Heart left ventricle (tissue), 16 donors: ENCODE measurements at regions of chr16 and their contacts with region 1.

Region 1: DNA sequence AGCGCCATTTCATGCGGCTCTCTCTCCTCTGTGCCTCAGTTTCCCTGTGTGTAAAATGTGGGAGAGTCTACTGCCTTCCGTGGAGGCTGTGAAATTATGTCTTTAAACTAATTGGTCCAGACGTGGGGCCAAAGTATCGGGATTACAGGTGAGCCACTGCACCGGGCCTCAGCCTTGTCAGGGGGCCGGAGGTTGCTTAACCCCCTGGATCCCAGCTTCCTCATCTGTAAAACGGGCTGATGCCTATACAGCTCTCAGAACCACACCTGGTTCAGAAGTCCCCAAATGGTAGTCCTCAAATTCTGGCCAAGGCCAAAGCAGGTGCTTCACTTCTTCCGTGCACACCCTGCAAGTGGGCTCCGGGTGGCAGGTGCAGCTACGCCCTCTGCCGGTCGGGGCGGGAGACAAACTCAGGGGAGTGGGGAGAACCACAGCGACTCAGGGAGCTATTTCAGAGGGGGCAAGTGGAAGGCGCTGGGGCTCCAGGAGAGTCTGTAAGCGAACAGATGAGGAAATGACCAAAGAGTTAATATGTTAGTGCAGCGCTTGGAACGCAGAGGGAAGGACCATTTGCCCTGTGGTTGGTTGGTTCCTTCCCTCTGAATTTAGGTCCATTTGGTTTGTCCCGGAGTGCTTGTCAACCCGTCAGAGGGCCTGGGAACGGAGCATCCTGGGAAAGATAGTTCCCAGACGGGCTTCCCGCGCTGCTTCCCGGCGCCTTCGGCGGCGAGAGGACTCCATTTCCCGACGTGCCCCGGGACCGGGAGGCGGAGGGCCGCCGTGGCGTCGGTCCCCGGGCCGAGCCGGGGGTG is at the start of gene MGRN1:
- DNase-seq: peak; percentile 94 to 97 (median 97)
- ATAC-seq: peak; percentile 98 to 99 (median 98)
- H3K4me3 ChIP-seq: peak within 1 kb of the TSS; percentile 70 to 100 (median 98)
- H3K27ac ChIP-seq: peak within 1 kb of the TSS; percentile 84 to 99 (median 94)
- H3K4me1 ChIP-seq: peaks cover 0 to 28% (median 16%) of the 10 kb centered on the region in 12 donors
- H3K27me3 ChIP-seq: no peaks in the 10 kb centered on the region
- CTCF ChIP-seq: peak; percentile 86 to 99 (median 92)
- POLR2A ChIP-seq: no peak
- total RNA-seq, gene MGRN1: 28.5 to 75.0 (median 42.0) TPM

Region 2: DNA sequence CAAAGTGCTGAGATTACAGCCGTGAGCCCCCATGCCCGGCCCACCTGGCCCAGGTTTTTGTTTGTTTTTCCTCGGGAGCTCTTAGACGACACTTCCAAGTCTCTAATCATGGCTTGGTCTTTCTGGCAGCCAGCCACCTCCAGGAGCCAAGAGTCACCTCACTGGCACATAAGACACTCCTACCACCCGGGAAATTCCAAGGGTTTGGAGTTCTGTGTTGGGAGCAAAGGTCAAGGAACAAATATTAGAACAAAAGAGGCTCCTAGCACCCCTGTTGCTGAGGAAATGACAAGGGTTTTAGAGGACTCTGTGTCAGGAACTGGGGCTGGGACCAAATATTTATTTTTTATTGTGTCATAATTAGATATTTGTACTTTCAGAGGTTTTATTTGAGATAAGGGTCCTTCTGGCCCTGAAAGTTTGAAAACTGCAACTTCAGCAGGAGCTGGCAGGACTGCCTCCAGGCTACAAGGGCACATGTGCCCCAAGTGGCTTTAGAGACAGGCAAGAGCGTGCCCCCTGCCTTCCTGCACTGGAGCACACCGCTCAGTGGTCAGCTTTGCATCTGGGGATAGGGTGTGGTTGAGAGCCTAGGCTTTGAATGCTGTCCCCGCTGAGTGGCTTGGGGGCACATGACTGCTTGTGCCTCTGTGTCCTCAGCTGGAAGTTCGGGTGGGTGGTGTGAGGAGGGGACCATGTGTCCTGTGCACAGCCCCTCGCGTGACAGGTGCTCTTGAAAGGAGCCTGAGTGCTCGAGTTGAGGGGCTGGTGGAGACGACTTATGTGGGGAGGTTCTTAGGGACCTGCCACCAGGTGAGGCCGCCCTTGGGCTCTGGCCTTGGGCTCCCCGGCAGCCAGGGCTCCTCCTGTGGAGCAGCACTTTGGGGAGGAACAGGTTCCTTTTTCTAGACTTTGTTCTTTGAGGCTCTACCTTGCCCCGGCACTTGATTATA is 30.1 kb after region 1 on chr16:
- intact Hi-C with region 1: no loop called
- DNase-seq: no peak
- ATAC-seq: no peak
- H3K4me3 ChIP-seq: no peak overlapping the region
- H3K27ac ChIP-seq: no peak overlapping the region
- H3K4me1 ChIP-seq: peaks cover 0 to 5% (median 0%) of the 10 kb centered on the region in 12 donors
- H3K27me3 ChIP-seq: no peaks in the 10 kb centered on the region
- CTCF ChIP-seq: no peak
- POLR2A ChIP-seq: no peak

Region 3: GRCh38 chr16:4693296-4693955 is 69.2 kb after region 1 on chr16 and contains the start of gene NUDT16L1:
- intact Hi-C with region 1: loop called in 1 of 10 experiments (anchors 5 kb)
- DNase-seq: peak; percentile 97 to 99 (median 98)
- ATAC-seq: peak; percentile 86 to 95 (median 90)
- H3K4me3 ChIP-seq: peak within 1 kb of the TSS; percentile 72 to 100 (median 96)
- H3K27ac ChIP-seq: peak within 1 kb of the TSS; percentile 61 to 96 (median 88)
- H3K4me1 ChIP-seq: peaks cover 5 to 46% (median 26%) of the 10 kb centered on the region in 12 donors
- H3K27me3 ChIP-seq: no peaks in the 10 kb centered on the region
- CTCF ChIP-seq: peak in 10 of 12 donors; percentile 13 to 62 (median 40)
- POLR2A ChIP-seq: peak; percentile 13 to 80
- total RNA-seq, gene NUDT16L1: 33.1 to 65.2 (median 46.4) TPM